CD4-positive, alpha-beta T cell (primary cell): ENCODE measurements at regions of chr5 and their contacts with region 1.

Region 1: GRCh38 chr5:90474235-90475109 is at the starts of genes MBLAC2 and POLR3G:
- DNase-seq: peak; percentile 89 to 97 (median 93)
- ATAC-seq: peak; percentile 88
- H3K4me3 ChIP-seq: peak within 1 kb of the TSS; percentile 98
- H3K4me3 Mint-ChIP-seq: peak within 1 kb of the TSS; percentile 100
- H3K27ac ChIP-seq: peak within 1 kb of the TSS; percentile 70 to 74
- H3K27ac Mint-ChIP-seq: peak within 1 kb of the TSS; percentile 92
- H3K4me1 ChIP-seq: peaks cover 19% of the 10 kb centered on the region
- H3K4me1 Mint-ChIP-seq: peaks cover 48% of the 10 kb centered on the region
- H3K27me3 ChIP-seq: no peaks in the 10 kb centered on the region
- H3K27me3 Mint-ChIP-seq: no peaks in the 10 kb centered on the region
- CTCF ChIP-seq: peak; percentile 49
- total RNA-seq, gene MBLAC2: 3.9 to 4.1 TPM
- total RNA-seq, gene POLR3G: 0.80 to 2.3 TPM

Region 2: DNA sequence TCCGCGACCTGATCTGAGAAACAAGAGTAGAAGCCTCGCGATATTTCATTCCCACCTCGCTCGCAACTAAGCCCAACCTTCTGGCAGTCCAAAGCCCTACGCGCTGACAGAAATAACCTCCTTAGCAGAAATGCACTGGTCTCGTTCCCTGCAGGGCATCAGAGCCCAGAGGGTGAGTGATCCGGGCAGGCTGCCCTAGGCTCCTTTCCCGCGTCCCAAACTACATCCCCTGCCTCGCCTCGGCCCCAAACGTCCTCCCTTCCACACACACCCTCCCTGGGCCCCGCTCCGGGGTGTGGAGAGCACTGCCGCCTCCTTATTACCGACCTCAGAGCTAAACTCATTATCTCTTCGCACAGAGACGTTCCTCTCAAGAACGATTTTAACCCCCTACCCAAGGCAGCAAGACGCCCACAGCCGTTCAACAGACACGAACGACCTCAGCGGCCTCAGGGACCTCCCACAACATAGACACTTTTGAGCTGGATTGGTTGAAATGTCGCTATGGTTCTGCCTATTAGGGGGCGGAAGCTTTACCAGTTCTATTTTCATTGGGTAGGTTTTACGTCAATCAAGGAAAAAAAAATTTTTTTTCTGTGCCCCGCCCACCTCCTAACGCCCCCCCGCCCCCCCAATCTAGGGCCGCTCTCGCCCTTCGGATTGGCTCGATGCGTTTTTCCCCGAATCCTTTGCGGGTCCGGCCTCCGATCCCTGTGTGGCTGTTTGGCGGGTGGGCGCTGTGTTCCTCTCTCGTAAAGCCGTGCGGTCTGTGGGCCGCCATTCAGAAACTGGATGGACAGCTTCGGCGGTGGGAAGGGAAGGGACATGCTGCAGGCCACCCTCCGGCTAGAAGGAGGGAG is 64.9 kb before region 1 on chr5 and contains the start of gene CETN3:
- CTCF ChIA-PET with region 1: interaction called, 4 read pairs
- POLR2A ChIA-PET with region 1: interaction called, 90 read pairs
- intact Hi-C with region 1: loop called (anchors 1 kb)
- DNase-seq: peak; percentile 80 to 95 (median 86)
- ATAC-seq: peak; percentile 91
- H3K4me3 ChIP-seq: peak within 1 kb of the TSS; percentile 82
- H3K4me3 Mint-ChIP-seq: no peak within 1 kb of the TSS
- H3K27ac ChIP-seq: peak within 1 kb of the TSS; percentile 92 to 94
- H3K27ac Mint-ChIP-seq: no peak within 1 kb of the TSS
- H3K4me1 ChIP-seq: peaks cover 7% of the 10 kb centered on the region
- H3K4me1 Mint-ChIP-seq: peaks cover 13% of the 10 kb centered on the region
- H3K27me3 ChIP-seq: no peaks in the 10 kb centered on the region
- H3K27me3 Mint-ChIP-seq: no peaks in the 10 kb centered on the region
- CTCF ChIP-seq: no peak
- total RNA-seq, gene CETN3: 3.2 to 4.9 TPM